Activated naive CD4-positive, alpha-beta T cell treated with anti-CD3 and anti-CD28 coated beads for 36 hours (primary cell): ENCODE measurements at regions of chr1 and their contacts with region 1.

Region 1: GRCh38 chr1:10941891-10942541 is 70.4 kb upstream of the TARDBP start:
- DNase-seq: peak; percentile 68
- H3K4me3 Mint-ChIP-seq: no peak overlapping the region
- H3K27ac Mint-ChIP-seq: no peak overlapping the region
- H3K4me1 Mint-ChIP-seq: peaks cover 44% of the 10 kb centered on the region
- H3K27me3 Mint-ChIP-seq: peaks cover 50% of the 10 kb centered on the region

Region 2: GRCh38 chr1:10824821-10825423 is 117.1 kb before region 1 on chr1:
- CTCF ChIA-PET with region 1: no interaction called
- intact Hi-C with region 1: no loop called
- DNase-seq: no peak
- H3K4me3 Mint-ChIP-seq: no peak overlapping the region
- H3K27ac Mint-ChIP-seq: no peak overlapping the region
- H3K4me1 Mint-ChIP-seq: no peaks in the 10 kb centered on the region
- H3K27me3 Mint-ChIP-seq: peaks cover 11% of the 10 kb centered on the region

Region 3: GRCh38 chr1:10867138-10867721 is 74.8 kb before region 1 on chr1:
- CTCF ChIA-PET with region 1: interaction called, 3 read pairs
- intact Hi-C with region 1: loop called (anchors 2 kb)
- DNase-seq: peak; percentile 52
- H3K4me3 Mint-ChIP-seq: no peak overlapping the region
- H3K27ac Mint-ChIP-seq: no peak overlapping the region
- H3K4me1 Mint-ChIP-seq: peaks cover 12% of the 10 kb centered on the region
- H3K27me3 Mint-ChIP-seq: peaks cover 64% of the 10 kb centered on the region

Region 4: GRCh38 chr1:10901086-10901890 is 40.7 kb before region 1 on chr1:
- CTCF ChIA-PET with region 1: no interaction called
- intact Hi-C with region 1: loop called (anchors 5 kb)
- DNase-seq: no peak
- H3K4me3 Mint-ChIP-seq: no peak overlapping the region
- H3K27ac Mint-ChIP-seq: no peak overlapping the region
- H3K4me1 Mint-ChIP-seq: peaks cover 21% of the 10 kb centered on the region
- H3K27me3 Mint-ChIP-seq: no peaks in the 10 kb centered on the region